CD8-positive, alpha-beta memory T cell (primary cell): ENCODE measurements at regions of chr12 and their contacts with region 1.

Region 1: DNA sequence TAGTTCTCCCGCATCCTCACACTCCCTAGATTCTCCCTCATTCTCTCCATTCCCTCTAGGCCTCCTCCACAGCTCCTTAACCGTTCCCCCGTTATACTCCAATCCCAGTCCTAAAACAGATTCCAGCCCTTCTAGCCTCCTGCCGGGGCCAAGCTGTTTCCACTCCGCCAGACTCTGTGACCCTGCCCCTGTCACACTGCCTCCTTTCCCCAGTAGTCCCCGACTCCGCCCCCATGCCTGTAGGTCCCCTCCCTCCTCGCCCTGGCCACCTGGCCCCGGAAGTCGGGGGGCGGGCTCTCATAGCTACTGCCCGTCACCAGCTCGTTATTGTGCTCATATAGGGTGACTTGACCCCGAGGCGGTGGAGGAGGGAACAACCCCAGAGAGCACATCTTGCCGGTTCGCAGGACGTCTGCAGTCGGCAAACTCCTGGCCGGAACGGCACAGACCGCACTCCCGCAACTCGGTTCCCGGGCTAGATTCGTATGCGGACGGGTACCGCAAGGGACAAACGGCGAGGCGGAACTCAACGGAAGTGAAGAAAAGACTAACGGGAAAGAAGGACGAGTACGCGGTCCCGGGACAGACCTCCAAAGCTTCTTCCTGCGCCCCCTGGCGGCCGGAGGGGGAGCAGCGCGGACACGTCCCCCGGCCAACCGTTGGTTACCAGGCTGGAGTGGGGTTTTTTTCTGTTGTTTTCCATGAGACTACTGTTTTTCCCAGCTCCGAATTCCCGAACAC is at the start of gene AAAS:
- DNase-seq: peak; percentile 94 to 97 (median 95)
- H3K4me3 ChIP-seq: peak within 1 kb of the TSS; percentile 99
- H3K4me3 Mint-ChIP-seq: peak within 1 kb of the TSS; percentile 95 to 100 (median 98)
- H3K27ac ChIP-seq: peak within 1 kb of the TSS; percentile 81
- H3K27ac Mint-ChIP-seq: peak within 1 kb of the TSS; percentile 95 to 99 (median 96)
- H3K4me1 ChIP-seq: peaks cover 31% of the 10 kb centered on the region
- H3K4me1 Mint-ChIP-seq: peaks cover 40 to 50% (median 40%) of the 10 kb centered on the region in 3 donors
- H3K27me3 ChIP-seq: no peaks in the 10 kb centered on the region
- H3K27me3 Mint-ChIP-seq: peaks cover 0 to 2% of the 10 kb centered on the region in 2 donors
- total RNA-seq, gene AAAS: 77.9 to 79.7 TPM

Region 2: DNA sequence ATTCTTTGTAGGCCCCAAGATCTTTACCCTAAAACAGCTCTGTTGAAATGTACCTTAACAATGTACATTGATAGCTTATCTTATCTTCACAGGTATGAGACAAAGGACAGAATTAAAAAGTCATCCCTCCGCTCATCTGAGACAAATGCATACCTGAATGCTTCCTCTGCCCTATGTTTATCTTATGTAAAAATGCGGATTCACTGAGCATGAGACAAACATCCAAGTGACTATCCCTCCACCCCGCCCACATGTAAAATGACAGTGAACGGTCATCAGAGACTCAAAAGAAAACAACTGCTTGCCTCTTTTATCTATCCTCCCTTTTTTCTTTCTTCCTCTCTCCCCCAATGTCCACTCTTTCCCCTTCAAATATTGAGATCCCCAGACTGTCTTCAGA is 177.9 kb before region 1 on chr12:
- CTCF ChIA-PET with region 1: no interaction called
- POLR2A ChIA-PET with region 1: no interaction called
- DNase-seq: no peak
- H3K4me3 ChIP-seq: no peak overlapping the region
- H3K4me3 Mint-ChIP-seq: no peak overlapping the region
- H3K27ac ChIP-seq: no peak overlapping the region
- H3K27ac Mint-ChIP-seq: no peak overlapping the region
- H3K4me1 ChIP-seq: no peaks in the 10 kb centered on the region
- H3K4me1 Mint-ChIP-seq: no peaks in the 10 kb centered on the region
- H3K27me3 ChIP-seq: no peaks in the 10 kb centered on the region
- H3K27me3 Mint-ChIP-seq: peaks cover 5 to 8% of the 10 kb centered on the region in 2 donors

Region 3: DNA sequence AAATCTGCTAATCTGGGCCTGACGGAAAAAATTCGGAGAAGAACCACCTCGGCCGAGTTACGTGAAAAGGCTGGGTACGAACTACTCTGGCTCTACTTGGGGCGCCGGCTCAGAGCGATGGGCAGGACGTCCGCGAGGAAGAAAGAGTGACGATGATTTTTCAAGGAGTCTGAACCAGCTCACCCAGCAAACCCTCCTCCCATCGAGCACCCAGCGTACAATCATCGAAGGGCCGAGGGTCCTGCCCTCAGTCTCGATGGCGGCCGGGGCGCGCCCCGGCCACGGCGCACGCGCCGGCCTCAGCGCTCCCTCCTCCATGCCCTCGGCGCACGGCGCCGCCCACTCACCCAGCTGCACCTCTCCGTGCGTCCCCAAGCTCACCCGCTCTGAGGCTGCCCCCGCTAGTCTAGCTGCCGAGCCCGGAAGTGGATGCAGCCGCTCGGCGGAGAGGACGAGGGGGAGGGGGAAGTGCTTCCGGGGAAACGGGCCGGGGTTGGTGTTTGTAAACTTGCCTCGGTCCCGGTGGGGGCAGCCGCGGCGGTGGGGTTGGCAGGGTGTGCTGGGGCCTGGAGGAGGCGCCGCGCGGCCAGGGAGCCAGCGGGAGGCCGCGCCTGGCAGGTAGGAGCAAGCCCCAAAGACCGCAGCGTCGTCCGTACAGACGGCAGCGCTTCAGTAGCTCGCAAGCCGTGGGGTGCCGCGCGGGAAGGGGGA is 140.9 kb before region 1 on chr12 and contains the starts of genes CSAD and ZNF740:
- CTCF ChIA-PET with region 1: interaction called, 12 read pairs
- POLR2A ChIA-PET with region 1: interaction called, 8 read pairs
- DNase-seq: peak; percentile 96 to 99 (median 97)
- H3K4me3 ChIP-seq: peak within 1 kb of the TSS; percentile 79
- H3K4me3 Mint-ChIP-seq: peak within 1 kb of the TSS; percentile 89 to 97 (median 93)
- H3K27ac ChIP-seq: peak within 1 kb of the TSS; percentile 86
- H3K27ac Mint-ChIP-seq: peak within 1 kb of the TSS; percentile 88 to 99 (median 96)
- H3K4me1 ChIP-seq: peaks cover 45% of the 10 kb centered on the region
- H3K4me1 Mint-ChIP-seq: peaks cover 51 to 56% (median 54%) of the 10 kb centered on the region in 3 donors
- H3K27me3 ChIP-seq: no peaks in the 10 kb centered on the region
- H3K27me3 Mint-ChIP-seq: no peaks in the 10 kb centered on the region
- total RNA-seq, gene CSAD: 15.8 to 18.7 TPM
- total RNA-seq, gene ZNF740: 50.4 to 52.0 TPM

Region 4: DNA sequence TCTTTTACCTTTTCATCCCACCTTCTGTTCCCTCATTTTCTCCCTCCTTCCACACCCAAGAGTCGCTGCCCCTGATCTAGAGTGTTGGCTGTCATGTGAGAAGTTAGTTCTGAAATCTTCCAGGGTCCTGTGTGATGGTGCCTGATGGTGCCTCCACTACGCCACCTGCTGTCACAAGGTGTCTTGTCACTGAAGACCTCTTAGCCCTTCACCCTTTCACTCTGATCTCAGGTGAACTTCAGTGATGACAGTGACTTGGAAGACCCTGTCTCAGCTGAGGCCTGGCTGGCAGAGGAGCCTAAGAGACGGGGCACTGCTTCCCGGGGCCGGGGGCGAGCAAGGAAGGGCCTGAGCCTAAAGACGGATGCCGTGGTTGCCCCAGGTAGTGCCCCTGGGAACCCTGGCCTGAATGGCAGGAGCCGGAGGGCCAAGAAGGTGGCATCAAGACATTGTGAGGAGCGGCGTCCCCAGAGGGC is 33.5 kb before region 1 on chr12:
- CTCF ChIA-PET with region 1: interaction called, 115 read pairs
- POLR2A ChIA-PET with region 1: no interaction called
- DNase-seq: peak; percentile 57 to 84 (median 63)
- H3K4me3 ChIP-seq: no peak overlapping the region
- H3K4me3 Mint-ChIP-seq: no peak overlapping the region
- H3K27ac ChIP-seq: no peak overlapping the region
- H3K27ac Mint-ChIP-seq: peak overlapping the region in 4 of 8 donors; percentile 37 to 78 (median 70)
- H3K4me1 ChIP-seq: no peaks in the 10 kb centered on the region
- H3K4me1 Mint-ChIP-seq: peaks cover 4 to 5% (median 5%) of the 10 kb centered on the region in 3 donors
- H3K27me3 ChIP-seq: no peaks in the 10 kb centered on the region
- H3K27me3 Mint-ChIP-seq: no peaks in the 10 kb centered on the region

Region 5: GRCh38 chr12:53344824-53345485 is 23.7 kb after region 1 on chr12:
- CTCF ChIA-PET with region 1: interaction called, 209 read pairs
- POLR2A ChIA-PET with region 1: interaction called, 28 read pairs
- DNase-seq: peak; percentile 53 to 80 (median 61)
- H3K4me3 ChIP-seq: peak overlapping the region; percentile 80
- H3K4me3 Mint-ChIP-seq: peak overlapping the region; percentile 90 to 98 (median 95)
- H3K27ac ChIP-seq: peak overlapping the region; percentile 4
- H3K27ac Mint-ChIP-seq: peak overlapping the region in 7 of 8 donors; percentile 75 to 95 (median 92)
- H3K4me1 ChIP-seq: peaks cover 9% of the 10 kb centered on the region
- H3K4me1 Mint-ChIP-seq: peaks cover 12 to 18% (median 14%) of the 10 kb centered on the region in 3 donors
- H3K27me3 ChIP-seq: no peaks in the 10 kb centered on the region
- H3K27me3 Mint-ChIP-seq: peaks cover 6 to 7% of the 10 kb centered on the region in 2 donors

Region 6: DNA sequence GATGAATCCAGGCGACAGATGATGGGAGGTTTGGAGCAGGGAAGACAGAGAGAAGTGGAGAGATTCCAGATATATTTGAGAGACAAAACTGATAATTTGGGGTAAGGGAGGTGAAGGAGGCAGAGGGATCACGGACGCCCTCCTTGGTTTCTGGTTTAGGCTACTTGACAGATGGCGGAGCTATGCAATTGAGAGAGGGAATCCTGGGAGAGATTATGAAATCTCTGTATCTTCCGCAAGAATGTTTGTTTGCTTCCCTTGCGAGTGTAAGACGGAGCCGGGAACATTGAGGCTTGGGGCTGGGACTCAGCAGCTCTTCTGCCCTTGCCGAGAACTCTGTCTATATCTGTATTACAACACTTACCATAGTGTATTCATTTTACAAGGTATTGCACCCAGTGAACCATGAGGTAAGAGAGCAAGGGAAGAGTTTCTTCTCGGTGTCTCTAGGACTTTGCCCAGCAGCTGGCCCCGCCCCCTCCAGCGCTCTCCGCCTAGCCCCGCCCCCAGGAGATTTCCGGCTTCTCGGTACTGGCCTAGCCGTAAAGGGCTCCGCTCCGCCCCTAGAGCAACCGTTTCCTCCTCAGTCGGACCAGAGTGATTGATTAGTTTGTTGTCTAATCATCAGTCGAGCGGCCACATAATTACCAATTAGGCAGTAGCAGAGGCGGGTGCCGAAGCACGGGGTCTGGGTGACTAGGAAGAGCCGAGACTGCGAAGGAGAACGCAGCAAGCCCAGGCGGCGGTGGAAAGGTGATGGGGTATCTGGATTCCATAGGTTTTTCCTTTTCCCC is 120.0 kb after region 1 on chr12 and contains the start of gene PRR13:
- CTCF ChIA-PET with region 1: interaction called, 11 read pairs
- POLR2A ChIA-PET with region 1: interaction called, 3 read pairs
- DNase-seq: peak; percentile 95 to 99 (median 98)
- H3K4me3 ChIP-seq: peak within 1 kb of the TSS; percentile 89
- H3K4me3 Mint-ChIP-seq: peak within 1 kb of the TSS; percentile 94 to 98 (median 97)
- H3K27ac ChIP-seq: peak within 1 kb of the TSS; percentile 91
- H3K27ac Mint-ChIP-seq: peak within 1 kb of the TSS; percentile 86 to 98 (median 96)
- H3K4me1 ChIP-seq: peaks cover 43% of the 10 kb centered on the region
- H3K4me1 Mint-ChIP-seq: peaks cover 37 to 48% (median 47%) of the 10 kb centered on the region in 3 donors
- H3K27me3 ChIP-seq: no peaks in the 10 kb centered on the region
- H3K27me3 Mint-ChIP-seq: no peaks in the 10 kb centered on the region
- total RNA-seq, gene PRR13: 234 to 236 TPM